ENCODE measurements at regions of chr17 and their contacts with region 1.

Region 1: DNA sequence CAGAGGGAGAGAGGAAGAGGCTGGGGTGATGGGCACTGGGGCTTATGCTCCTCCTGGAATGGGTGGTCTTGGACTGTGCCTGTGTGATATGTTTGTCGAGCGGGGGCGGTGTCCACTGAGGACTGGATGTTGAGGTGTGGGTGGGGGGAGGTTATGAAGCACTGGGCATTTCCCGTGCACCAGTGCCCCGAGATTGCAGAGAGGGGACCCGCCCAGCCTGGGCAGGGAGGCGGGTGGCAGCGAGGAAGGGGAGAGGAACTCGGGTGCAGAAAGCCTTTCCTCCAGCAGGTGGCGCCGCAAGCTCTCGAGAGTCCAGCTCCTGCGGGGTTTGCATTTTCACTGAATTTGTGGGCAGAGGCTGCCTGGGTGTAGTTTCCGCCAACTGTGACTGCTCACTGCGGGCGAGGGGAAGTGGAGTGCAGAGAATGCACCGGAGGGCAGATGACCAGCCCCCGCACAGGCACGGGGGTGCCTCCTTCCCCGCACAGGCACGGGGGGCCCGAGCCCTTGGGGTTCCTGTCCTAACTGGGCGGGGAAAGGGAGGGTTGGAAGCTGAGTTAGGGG is 190.6 kb downstream of the SEC14L1 start:
- DNase-seq: peak; percentile 95
- ATAC-seq: peak; percentile 88
- H3K4me3 Mint-ChIP-seq: peak overlapping the region; percentile 35; the same call in 1 of the 2 replicates
- H3K27ac Mint-ChIP-seq: peak overlapping the region; percentile 47; the same call in 1 of the 2 replicates
- H3K4me1 Mint-ChIP-seq: peaks cover 25% of the 10 kb centered on the region
- H3K27me3 Mint-ChIP-seq: no peaks in the 10 kb centered on the region
- CTCF ChIP-seq: peak; percentile 89

Region 2: GRCh38 chr17:76909971-76910760 is 421.2 kb before region 1 on chr17:
- CTCF ChIA-PET with region 1: no interaction called
- POLR2A ChIA-PET with region 1: no interaction called
- DNase-seq: peak; percentile 92
- ATAC-seq: peak; percentile 83
- H3K4me3 Mint-ChIP-seq: no peak overlapping the region
- H3K27ac Mint-ChIP-seq: 0 out of 2 replicates have a peak overlapping the region, but pooled peaks have one; percentile 7
- H3K4me1 Mint-ChIP-seq: peaks cover 17% of the 10 kb centered on the region
- H3K27me3 Mint-ChIP-seq: no peaks in the 10 kb centered on the region
- CTCF ChIP-seq: no peak

Region 3: DNA sequence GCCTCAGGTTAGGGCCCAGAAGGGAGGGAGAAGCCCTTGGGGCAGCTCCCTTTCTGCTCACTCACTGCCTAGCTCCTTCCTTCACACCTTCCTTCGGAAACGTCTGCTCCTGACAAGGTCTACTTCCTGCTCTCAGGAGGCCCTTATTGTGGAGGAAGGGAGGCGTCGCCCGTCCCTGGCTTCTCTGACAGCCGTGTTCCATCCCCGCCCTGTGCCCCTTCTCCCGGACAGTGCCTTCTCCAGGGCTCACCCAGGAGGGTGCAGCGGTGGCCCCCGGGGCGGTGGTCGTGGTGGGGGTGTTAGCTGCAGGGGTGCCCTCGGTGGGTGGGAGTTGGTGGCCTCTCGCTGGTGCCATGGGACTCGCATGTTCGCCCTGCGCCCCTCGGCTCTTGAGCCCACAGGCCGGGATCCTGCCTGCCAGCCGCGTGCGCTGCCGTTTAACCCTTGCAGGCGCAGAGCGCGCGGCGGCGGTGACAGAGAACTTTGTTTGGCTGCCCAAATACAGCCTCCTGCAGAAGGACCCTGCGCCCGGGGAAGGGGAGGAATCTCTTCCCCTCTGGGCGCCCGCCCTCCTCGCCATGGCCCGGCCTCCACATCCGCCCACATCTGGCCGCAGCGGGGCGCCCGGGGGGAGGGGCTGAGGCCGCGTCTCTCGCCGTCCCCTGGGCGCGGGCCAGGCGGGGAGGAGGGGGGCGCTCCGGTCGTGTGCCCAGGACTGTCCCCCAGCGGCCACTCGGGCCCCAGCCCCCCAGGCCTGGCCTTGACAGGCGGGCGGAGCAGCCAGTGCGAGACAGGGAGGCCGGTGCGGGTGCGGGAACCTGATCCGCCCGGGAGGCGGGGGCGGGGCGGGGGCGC is 41.3 kb after region 1 on chr17:
- CTCF ChIA-PET with region 1: interaction called, 22 read pairs
- POLR2A ChIA-PET with region 1: no interaction called
- DNase-seq: peak; percentile 88
- ATAC-seq: peak; percentile 67
- H3K4me3 Mint-ChIP-seq: peak overlapping the region; percentile 66
- H3K27ac Mint-ChIP-seq: no peak overlapping the region
- H3K4me1 Mint-ChIP-seq: peaks cover 63% of the 10 kb centered on the region
- H3K27me3 Mint-ChIP-seq: no peaks in the 10 kb centered on the region
- CTCF ChIP-seq: no peak

Region 4: DNA sequence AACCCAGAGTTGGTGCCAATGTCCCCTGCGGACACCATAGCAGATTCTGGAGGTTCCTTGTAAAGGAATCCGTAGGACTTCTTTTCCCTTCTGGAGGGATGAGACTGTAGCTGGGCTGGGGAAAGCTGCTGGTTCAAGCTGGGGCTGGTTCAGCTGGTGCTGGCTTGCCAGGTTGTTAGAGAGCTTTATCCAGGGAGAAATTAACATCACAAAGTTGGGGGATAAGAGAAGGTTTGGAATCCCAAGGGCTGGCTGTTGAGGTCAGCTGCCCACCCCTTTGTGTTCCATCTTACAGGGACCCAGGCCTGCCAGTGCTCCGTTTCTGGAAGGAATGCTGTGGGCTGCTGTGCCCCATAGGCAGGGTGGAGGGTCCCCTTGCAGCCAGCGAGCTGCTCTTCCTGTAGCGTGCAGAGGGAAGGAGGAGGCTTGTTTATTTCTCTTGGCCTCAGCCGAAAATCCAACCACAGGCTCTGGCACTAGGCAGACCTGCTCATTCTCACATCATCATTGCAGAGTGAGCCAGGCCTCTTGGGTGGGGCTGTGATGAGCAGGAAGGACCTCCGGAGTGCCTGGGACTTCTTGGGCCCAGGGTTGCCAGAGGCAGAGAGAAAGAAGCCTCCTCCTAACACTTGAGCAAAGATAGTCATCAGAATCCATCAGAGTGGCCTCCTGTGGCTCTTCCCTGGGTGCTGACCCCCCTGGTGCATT is 60.4 kb after region 1 on chr17:
- CTCF ChIA-PET with region 1: interaction called, 18 read pairs
- POLR2A ChIA-PET with region 1: no interaction called
- DNase-seq: peak; percentile 51
- ATAC-seq: peak; percentile 64
- H3K4me3 Mint-ChIP-seq: peak overlapping the region; percentile 41
- H3K27ac Mint-ChIP-seq: peak overlapping the region; percentile 98
- H3K4me1 Mint-ChIP-seq: peaks cover 82% of the 10 kb centered on the region
- H3K27me3 Mint-ChIP-seq: no peaks in the 10 kb centered on the region
- CTCF ChIP-seq: no peak

Region 5: DNA sequence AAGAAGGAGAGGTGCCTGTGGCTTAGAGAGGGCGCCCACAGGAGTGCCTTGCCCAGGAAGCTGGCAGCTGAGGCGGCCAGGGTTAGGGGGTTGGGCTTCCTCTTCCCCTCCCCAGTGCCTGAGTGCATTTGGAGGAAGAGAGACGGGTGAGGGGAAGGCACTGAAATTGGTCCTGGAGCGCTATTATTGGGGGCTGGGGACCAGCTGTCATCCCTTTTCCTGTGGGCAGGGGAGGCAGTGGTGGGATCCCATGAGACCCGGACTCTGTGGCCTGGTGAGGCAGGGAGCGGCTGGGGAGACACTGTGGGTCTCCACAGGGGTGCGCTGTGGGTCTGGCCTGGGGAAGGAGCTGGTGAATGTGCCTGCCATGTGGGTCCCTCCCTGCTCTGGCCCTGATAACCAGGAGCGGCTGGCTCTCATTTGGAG is 69.1 kb after region 1 on chr17:
- CTCF ChIA-PET with region 1: interaction called, 14 read pairs
- POLR2A ChIA-PET with region 1: no interaction called
- DNase-seq: peak; percentile 67
- ATAC-seq: peak; percentile 84
- H3K4me3 Mint-ChIP-seq: no peak overlapping the region
- H3K27ac Mint-ChIP-seq: peak overlapping the region; percentile 73; the same call in 1 of the 2 replicates
- H3K4me1 Mint-ChIP-seq: peaks cover 28% of the 10 kb centered on the region
- H3K27me3 Mint-ChIP-seq: no peaks in the 10 kb centered on the region
- CTCF ChIP-seq: no peak

Region 6: GRCh38 chr17:77420804-77421629 is 89.6 kb after region 1 on chr17:
- CTCF ChIA-PET with region 1: interaction called, 13 read pairs
- POLR2A ChIA-PET with region 1: no interaction called
- DNase-seq: peak; percentile 74
- ATAC-seq: peak; percentile 60
- H3K4me3 Mint-ChIP-seq: peak overlapping the region; percentile 48
- H3K27ac Mint-ChIP-seq: peak overlapping the region; percentile 99
- H3K4me1 Mint-ChIP-seq: peaks cover 65% of the 10 kb centered on the region
- H3K27me3 Mint-ChIP-seq: no peaks in the 10 kb centered on the region; the same call in 1 of the 2 replicates
- CTCF ChIP-seq: no peak

Region 7: DNA sequence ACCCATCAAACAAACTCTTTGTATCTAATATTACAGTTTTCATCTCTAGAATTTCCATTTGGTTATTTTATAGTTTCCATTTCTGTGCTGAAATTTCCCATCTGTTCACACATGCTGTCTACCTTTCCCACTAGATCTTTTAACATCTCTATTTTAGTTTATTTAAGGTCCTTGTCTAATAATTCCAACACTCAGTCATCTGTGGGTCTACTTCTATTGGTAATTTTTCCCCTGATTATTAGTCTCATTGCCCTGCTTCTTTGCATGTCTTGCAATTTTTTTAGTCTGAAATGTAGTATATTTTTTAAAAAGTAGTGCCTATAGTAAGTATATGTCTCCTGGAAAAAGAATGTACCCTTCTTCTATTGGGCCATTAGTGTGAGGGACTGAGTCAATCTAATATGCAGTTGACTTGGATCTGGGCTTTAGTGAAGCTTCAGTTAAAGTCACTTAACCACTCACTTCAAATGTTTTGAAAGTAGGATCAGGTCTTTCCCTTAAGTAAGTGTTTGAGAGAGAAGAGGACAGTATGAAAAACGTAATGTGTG is 180.2 kb after region 1 on chr17:
- CTCF ChIA-PET with region 1: no interaction called
- POLR2A ChIA-PET with region 1: no interaction called
- DNase-seq: no peak
- ATAC-seq: no peak
- H3K4me3 Mint-ChIP-seq: no peak overlapping the region
- H3K27ac Mint-ChIP-seq: no peak overlapping the region
- H3K4me1 Mint-ChIP-seq: no peaks in the 10 kb centered on the region
- H3K27me3 Mint-ChIP-seq: no peaks in the 10 kb centered on the region; the same call in 1 of the 2 replicates
- CTCF ChIP-seq: no peak